ENCODE measurements at regions of chr5 and their contacts with region 1.

Region 1: GRCh38 chr5:138552700-138553099 is 9.7 kb upstream of the ETF1 start:
- DNase-seq: no peak
- H3K4me3 ChIP-seq: no peak overlapping the region
- H3K27ac ChIP-seq: no peak overlapping the region
- H3K4me1 ChIP-seq: no peaks in the 10 kb centered on the region
- H3K27me3 ChIP-seq: no peaks in the 10 kb centered on the region

Region 2: DNA sequence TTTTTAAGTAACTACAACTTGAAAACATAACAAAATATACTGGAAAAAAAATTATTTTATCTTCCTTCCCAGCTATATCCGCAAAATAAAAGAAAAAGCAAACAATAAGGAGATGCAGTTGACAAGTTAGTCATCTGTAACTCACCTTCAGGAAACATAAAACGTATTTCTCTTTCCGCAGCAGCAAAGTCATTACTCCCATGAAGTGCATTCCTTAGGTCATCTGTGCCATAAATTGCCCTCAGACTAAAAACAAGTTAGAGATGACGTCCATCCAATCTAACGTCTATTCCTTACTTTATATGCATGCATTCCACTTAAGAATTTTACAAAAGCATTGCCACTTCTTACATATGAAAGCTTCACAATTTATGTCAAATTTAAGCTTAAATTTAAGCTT is 424.4 kb before region 1 on chr5:
- CTCF ChIA-PET with region 1: no interaction called
- POLR2A ChIA-PET with region 1: no interaction called
- DNase-seq: peak; percentile 18 to 77 (median 52)
- H3K4me3 ChIP-seq: no peak overlapping the region
- H3K27ac ChIP-seq: peak overlapping the region in 1 of 2 experiments; percentile 71
- H3K4me1 ChIP-seq: peaks cover 0 to 3% (median 0%) of the 10 kb centered on the region in 4 experiments
- H3K27me3 ChIP-seq: no peaks in the 10 kb centered on the region

Region 3: GRCh38 chr5:138568061-138568824 is 15.5 kb after region 1 on chr5:
- CTCF ChIA-PET with region 1: interaction called, 14 read pairs
- POLR2A ChIA-PET with region 1: interaction called, 3 read pairs
- DNase-seq: peak in 1 of 3 donors; percentile 21
- H3K4me3 ChIP-seq: no peak overlapping the region
- H3K27ac ChIP-seq: no peak overlapping the region
- H3K4me1 ChIP-seq: peaks cover 0 to 2% (median under 1%) of the 10 kb centered on the region in 4 experiments
- H3K27me3 ChIP-seq: no peaks in the 10 kb centered on the region

Region 4: DNA sequence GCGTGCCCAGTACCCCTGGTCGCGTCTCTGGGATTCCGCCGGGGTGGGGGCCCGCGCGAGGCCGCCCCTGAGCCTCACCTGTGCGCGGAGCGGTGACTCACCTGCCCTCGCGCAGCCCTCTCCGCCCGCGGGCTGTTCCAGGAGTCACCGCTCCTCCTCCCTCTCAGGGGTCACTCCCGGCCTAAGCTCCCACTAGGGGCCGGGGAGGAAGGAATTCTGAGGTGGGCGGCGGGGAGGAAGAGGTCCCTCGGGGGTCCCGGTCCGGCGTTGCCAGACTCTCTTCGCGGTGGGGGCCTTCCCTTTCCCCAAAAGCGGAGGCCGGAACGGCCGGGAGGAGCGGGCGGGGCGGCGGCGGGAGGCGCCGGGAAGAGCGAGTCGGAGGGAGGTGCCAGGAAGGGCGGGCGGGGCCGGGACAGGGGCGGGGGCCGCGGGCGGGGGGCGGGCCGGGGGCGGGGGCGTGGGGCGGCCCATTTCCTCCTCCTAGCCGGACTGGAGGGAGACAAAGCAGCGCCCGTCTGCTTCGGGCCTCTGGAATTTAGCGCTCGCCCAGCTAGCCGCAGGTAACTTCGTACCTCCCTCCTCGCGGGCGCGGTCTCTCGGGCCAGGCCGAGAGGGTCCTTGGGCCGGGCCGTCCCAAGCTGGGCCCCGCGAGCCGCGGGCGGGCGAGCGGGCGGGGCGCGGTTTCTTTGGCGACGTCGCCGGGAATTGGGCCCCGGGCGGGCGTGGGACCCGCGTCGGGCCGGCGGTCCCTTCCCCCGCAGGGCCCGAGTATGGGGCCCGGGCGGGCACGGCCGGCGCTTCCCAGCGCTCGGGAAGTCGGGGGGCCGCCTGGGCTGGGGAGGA is 200.5 kb after region 1 on chr5 and contains the start of gene CTNNA1:
- CTCF ChIA-PET with region 1: no interaction called
- POLR2A ChIA-PET with region 1: no interaction called
- DNase-seq: peak; percentile 42 to 66 (median 51)
- H3K4me3 ChIP-seq: peak within 1 kb of the TSS; percentile 71 to 94 (median 80)
- H3K27ac ChIP-seq: peak within 1 kb of the TSS in 1 of 2 experiments; percentile 71
- H3K4me1 ChIP-seq: peaks cover 4 to 19% (median 11%) of the 10 kb centered on the region in 4 experiments
- H3K27me3 ChIP-seq: no peaks in the 10 kb centered on the region